ENCODE measurements at regions of chr20 and their contacts with region 1.

Region 1: DNA sequence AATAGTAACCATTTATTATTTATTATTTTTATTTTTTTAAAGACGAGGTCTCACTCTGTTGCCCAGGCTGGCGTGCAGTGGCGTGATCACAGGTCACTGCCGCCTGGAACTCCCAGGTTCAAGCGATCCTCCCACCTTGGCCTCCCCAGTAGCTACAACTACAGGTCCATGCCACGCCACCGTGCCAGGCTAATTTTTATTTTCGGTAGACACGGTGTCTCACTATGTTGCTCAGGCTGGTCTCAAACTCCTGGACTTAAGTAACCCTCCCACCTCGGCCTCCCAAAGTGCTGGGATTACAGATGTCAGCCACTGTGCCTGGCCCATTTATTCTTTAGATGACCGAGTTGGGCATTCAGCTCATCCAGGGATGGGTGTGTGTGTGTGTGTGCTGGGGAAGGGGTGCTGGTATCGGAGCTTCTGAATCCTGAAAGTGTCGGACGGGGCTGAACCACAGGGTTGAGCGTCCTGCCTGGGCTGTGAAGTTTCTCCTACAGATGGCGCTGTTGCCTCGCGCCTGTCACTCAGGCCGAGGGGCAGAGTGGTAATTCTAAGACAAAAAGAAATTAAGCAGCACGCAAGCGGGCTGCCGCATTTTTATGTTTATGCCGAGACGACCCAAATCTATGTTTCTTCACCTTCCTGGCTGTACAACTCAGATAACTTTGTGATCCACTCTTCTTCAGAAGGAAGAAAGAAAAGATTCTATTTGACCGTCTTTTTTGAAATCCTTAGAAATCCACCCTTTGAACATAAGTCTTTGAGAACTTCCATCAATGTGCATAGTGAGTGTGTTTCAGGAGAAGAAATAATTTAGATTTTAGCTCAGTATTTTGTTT is 252.8 kb downstream of the CDH26 start:
- DNase-seq: peak; percentile 32
- H3K4me3 Mint-ChIP-seq: no peak overlapping the region
- H3K27ac Mint-ChIP-seq: no peak overlapping the region
- H3K4me1 Mint-ChIP-seq: no peaks in the 10 kb centered on the region
- H3K27me3 Mint-ChIP-seq: peaks cover 1% of the 10 kb centered on the region

Region 2: GRCh38 chr20:60262967-60263603 is 52.1 kb after region 1 on chr20:
- intact Hi-C with region 1: loop called (anchors 1 kb)
- DNase-seq: peak; percentile 12
- H3K4me3 Mint-ChIP-seq: no peak overlapping the region
- H3K27ac Mint-ChIP-seq: no peak overlapping the region
- H3K4me1 Mint-ChIP-seq: no peaks in the 10 kb centered on the region
- H3K27me3 Mint-ChIP-seq: no peaks in the 10 kb centered on the region

Measured in activated T-helper 1 cell treated with anti-CD3 and anti-CD28 coated beads, Interleukin-12 subunit alpha, Interleukin-12 subunit beta, Interleukin-2, Interleukin-4 antibody, amounts not matched to agents 30 ng/mL and 10 ng/mL and 1 ng/mL, durations not matched to agents 14 hours and 24 hours and 36 hours (primary cell).